A549 (cell line): ENCODE measurements at regions of chr17 and their contacts with region 1.

Region 1: DNA sequence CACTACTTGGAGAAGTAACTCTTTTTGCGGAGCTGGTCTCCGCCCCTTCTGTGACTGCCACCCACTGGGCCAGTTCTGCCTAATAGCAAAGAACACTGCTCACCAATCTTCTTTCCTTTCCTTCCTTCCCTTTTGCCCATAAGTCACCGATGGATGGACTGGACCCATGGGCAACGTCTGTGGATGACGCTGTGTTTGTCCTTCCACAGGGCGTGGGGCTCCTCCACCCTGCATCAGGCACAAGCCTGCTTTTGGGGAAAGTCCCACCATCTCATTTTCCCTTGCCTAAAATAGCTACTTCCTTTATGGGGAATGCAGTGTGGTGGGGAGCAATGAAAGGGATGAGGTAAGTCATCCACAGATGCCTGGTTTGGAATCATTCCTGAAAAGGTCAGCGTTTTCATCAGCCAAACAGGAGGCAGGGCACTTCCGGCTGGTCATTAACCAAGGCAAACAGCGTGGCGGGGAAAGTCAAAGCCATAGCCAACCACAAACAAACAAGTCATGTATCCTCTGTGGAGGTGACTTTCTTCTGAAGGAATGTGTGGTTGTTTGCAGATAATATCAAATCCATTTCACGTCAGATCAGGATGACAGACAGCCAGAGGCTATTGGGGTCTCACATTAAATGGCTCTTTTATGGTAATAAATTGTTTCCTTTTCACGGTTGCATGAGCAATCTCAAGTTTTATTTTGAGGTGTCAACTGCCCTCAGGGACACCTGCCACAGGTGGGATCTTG is 30.7 kb upstream of the MED9 start:
- DNase-seq: peak; percentile 98
- ATAC-seq: peak; percentile 86 to 88
- H3K4me3 ChIP-seq: peak overlapping the region; percentile 14; the same call in 1 of the 3 replicates
- H3K27ac ChIP-seq: peak overlapping the region; percentile 71 to 83
- H3K4me1 ChIP-seq: peaks cover 48% of the 10 kb centered on the region
- CTCF ChIP-seq: no peak
- EP300 ChIP-seq: peak; percentile 90 to 97; a peak in 4 of 5 replicates
- POLR2A ChIP-seq: no peak
- RAD21 ChIP-seq: peak; percentile 5 to 49; a peak in 3 of 5 replicates

Region 2: GRCh38 chr17:16617481-16618060 is 828.5 kb before region 1 on chr17:
- CTCF ChIA-PET with region 1: no interaction called
- POLR2A ChIA-PET with region 1: no interaction called
- DNase-seq: no peak
- ATAC-seq: no peak
- H3K4me3 ChIP-seq: no peak overlapping the region
- H3K27ac ChIP-seq: no peak overlapping the region
- H3K4me1 ChIP-seq: no peaks in the 10 kb centered on the region
- CTCF ChIP-seq: no peak
- EP300 ChIP-seq: no peak
- POLR2A ChIP-seq: no peak
- RAD21 ChIP-seq: no peak

Region 3: DNA sequence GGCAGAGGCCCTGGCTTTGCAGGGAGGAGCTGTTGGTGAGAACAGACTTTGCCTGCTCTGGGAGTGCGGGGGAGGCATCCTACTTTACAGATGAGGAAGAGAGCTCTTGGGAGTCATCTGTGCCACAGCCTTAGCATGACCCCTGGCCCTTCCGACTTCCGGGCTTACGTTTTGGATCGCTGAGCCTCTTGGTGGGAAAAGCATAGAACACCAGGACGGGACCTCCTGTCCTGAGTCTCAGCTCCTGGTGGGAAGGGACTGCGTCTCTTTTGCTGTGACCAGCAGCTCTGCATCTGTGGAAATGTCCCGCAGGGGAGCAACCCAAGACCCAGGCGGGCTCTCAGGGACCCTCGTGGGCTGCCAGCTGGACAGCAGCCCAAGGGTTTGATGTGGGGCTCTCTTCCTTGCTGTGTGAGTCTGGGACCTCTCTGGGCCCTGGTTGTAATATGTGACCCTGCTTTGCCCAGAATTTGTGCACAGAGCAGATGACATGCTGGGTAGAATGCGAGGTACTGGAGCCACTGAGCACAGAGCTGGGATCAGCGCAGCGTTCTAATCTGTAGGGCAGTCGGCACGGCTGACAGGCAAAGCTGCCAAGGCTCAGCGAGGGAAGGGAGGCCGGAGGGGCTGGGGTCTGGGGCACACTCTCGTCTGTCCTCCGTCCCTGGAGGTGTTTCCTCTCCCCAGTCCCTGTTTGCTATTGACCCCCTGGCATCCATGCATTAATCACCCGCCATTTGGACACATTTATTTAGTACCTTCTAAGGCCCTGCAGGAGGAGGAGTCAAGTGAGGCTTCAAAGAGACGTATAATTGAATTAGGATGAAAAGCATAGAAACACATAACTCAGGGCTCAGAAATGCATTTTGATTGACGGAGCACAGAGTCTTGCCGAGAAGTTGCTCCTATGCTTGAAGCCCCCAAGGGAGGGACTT is 78.9 kb before region 1 on chr17:
- CTCF ChIA-PET with region 1: no interaction called
- POLR2A ChIA-PET with region 1: no interaction called
- DNase-seq: no peak
- ATAC-seq: no peak
- H3K4me3 ChIP-seq: no peak overlapping the region
- H3K27ac ChIP-seq: no peak overlapping the region
- H3K4me1 ChIP-seq: peaks cover 5% of the 10 kb centered on the region; the same call in 2 of the 3 replicates
- CTCF ChIP-seq: no peak
- EP300 ChIP-seq: no peak
- POLR2A ChIP-seq: no peak
- RAD21 ChIP-seq: no peak

Region 4: DNA sequence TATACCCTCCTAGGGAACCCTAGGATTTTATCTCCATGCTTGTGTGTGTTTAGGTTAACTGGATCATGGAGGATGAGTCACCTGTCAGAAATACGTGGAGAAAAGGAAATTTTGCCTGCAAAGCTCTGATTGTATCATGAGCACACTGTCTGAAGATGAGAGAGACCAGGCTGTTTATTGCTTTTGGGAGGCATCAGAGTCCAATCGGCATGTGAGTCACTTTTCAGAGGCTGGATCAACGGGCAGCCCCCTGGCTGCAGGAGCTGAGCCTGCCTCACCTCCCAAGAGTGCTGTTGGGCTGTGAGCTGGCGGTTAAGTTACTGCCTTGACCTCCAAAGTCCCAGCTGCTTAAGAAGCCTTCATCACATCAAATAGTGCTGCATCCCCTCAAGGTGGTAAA is 10.8 kb before region 1 on chr17:
- CTCF ChIA-PET with region 1: interaction called, 10 read pairs
- POLR2A ChIA-PET with region 1: interaction called, 12 read pairs
- DNase-seq: peak; percentile 35 to 78
- ATAC-seq: peak; percentile 78 to 87
- H3K4me3 ChIP-seq: no peak overlapping the region
- H3K27ac ChIP-seq: peak overlapping the region; percentile 60 to 71
- H3K4me1 ChIP-seq: peaks cover 42% of the 10 kb centered on the region
- CTCF ChIP-seq: no peak
- EP300 ChIP-seq: peak; percentile 38 to 65; a peak in 1 of 5 replicates
- POLR2A ChIP-seq: no peak
- RAD21 ChIP-seq: peak in 1 of 2 experiments; percentile 28; a peak in 2 of 5 replicates

Region 5: GRCh38 chr17:17503566-17504130 is 57.6 kb after region 1 on chr17:
- CTCF ChIA-PET with region 1: no interaction called
- POLR2A ChIA-PET with region 1: no interaction called
- DNase-seq: no peak
- ATAC-seq: no peak; a peak in 2 of 6 replicates
- H3K4me3 ChIP-seq: no peak overlapping the region
- H3K27ac ChIP-seq: no peak overlapping the region
- H3K4me1 ChIP-seq: no peaks in the 10 kb centered on the region
- CTCF ChIP-seq: no peak
- EP300 ChIP-seq: no peak
- POLR2A ChIP-seq: no peak
- RAD21 ChIP-seq: no peak